ENCODE measurements at regions of chr19 and their contacts with region 1.

Region 1: DNA sequence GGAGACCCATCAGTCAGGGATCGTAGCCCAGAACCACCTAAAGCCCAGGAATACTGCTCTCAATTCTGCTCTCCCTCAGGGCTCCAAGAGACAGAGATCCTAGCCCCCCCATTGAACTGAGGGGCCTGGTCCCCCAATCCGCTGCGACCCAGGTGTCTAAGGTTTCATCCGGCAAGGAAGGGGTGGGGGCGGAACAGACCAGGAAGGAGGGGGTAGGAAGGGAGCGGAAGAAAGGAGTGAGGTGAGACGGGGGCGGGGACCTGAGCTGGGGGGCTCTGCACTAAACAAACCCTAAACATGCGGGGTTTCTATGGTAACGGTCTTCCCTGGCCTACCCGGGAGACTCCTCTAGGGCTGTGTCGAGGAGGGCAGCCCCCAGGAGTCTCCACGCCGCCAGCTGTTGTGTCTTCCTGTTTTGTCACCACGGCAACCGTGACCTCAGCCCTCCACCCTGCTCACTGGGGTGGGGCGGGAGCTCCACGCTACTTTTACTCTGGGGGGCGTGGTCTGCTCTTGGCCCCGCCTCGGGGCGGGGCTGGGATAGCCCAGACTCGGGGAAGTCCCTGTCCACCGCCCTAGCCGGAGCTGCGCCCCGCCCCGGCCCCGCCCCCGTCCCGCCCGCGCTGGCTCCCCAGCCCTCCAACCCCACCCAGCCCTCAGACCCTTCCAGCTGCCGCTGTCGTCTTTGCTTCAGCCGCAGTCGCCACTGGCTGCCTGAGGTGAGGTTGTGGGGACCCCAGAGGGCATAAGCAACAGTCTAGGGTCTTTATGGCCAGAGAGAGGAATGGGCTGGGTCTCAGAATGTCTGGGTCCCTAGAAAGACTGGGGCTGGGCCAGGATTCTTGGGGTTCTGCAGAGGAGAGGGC is at the start of gene MYADM:
- DNase-seq: peak; percentile 99 to 100 (median 100)
- ATAC-seq: peak; percentile 80
- H3K4me3 ChIP-seq: peak within 1 kb of the TSS; percentile 90
- H3K4me3 Mint-ChIP-seq: peak within 1 kb of the TSS; percentile 92 to 100 (median 97)
- H3K27ac ChIP-seq: peak within 1 kb of the TSS; percentile 99
- H3K27ac Mint-ChIP-seq: peak within 1 kb of the TSS; percentile 97 to 100 (median 99)
- H3K4me1 ChIP-seq: peaks cover 17 to 26% of the 10 kb centered on the region in 2 donors
- H3K4me1 Mint-ChIP-seq: peaks cover 15 to 45% (median 34%) of the 10 kb centered on the region in 7 donors
- H3K27me3 ChIP-seq: no peaks in the 10 kb centered on the region
- H3K27me3 Mint-ChIP-seq: peaks cover 0 to 5% (median 0%) of the 10 kb centered on the region in 5 donors
- total RNA-seq, gene MYADM: 51.5 to 524 (median 116) TPM

Region 2: GRCh38 chr19:53844849-53845246 is 22.6 kb before region 1 on chr19:
- CTCF ChIA-PET with region 1: no interaction called
- POLR2A ChIA-PET with region 1: interaction called, 3 read pairs
- intact Hi-C with region 1: loop called (anchors 1 kb)
- DNase-seq: no peak
- ATAC-seq: peak; percentile 63
- H3K4me3 ChIP-seq: no peak overlapping the region
- H3K4me3 Mint-ChIP-seq: no peak overlapping the region
- H3K27ac ChIP-seq: no peak overlapping the region
- H3K27ac Mint-ChIP-seq: no peak overlapping the region
- H3K4me1 ChIP-seq: peaks cover 0 to 3% of the 10 kb centered on the region in 2 donors
- H3K4me1 Mint-ChIP-seq: peaks cover 0 to 7% (median 5%) of the 10 kb centered on the region in 7 donors
- H3K27me3 ChIP-seq: peaks cover 0 to 4% of the 10 kb centered on the region in 2 donors
- H3K27me3 Mint-ChIP-seq: peaks cover 18 to 30% (median 23%) of the 10 kb centered on the region in 5 donors

Region 3: GRCh38 chr19:53906211-53907192 is 39.0 kb after region 1 on chr19:
- CTCF ChIA-PET with region 1: no interaction called
- POLR2A ChIA-PET with region 1: no interaction called
- intact Hi-C with region 1: loop called in 1 of 2 experiments (anchors 1 kb)
- DNase-seq: peak; percentile 33 to 78 (median 55)
- ATAC-seq: peak; percentile 80
- H3K4me3 ChIP-seq: no peak overlapping the region
- H3K4me3 Mint-ChIP-seq: peak overlapping the region in 6 of 10 donors; percentile 26 to 87 (median 63)
- H3K27ac ChIP-seq: no peak overlapping the region
- H3K27ac Mint-ChIP-seq: peak overlapping the region in 1 of 9 donors; percentile 10
- H3K4me1 ChIP-seq: peaks cover 5 to 13% of the 10 kb centered on the region in 2 donors
- H3K4me1 Mint-ChIP-seq: peaks cover 21 to 34% (median 28%) of the 10 kb centered on the region in 7 donors
- H3K27me3 ChIP-seq: peaks cover 3 to 34% of the 10 kb centered on the region in 2 donors
- H3K27me3 Mint-ChIP-seq: peaks cover 60 to 91% (median 78%) of the 10 kb centered on the region in 5 donors

Region 4: DNA sequence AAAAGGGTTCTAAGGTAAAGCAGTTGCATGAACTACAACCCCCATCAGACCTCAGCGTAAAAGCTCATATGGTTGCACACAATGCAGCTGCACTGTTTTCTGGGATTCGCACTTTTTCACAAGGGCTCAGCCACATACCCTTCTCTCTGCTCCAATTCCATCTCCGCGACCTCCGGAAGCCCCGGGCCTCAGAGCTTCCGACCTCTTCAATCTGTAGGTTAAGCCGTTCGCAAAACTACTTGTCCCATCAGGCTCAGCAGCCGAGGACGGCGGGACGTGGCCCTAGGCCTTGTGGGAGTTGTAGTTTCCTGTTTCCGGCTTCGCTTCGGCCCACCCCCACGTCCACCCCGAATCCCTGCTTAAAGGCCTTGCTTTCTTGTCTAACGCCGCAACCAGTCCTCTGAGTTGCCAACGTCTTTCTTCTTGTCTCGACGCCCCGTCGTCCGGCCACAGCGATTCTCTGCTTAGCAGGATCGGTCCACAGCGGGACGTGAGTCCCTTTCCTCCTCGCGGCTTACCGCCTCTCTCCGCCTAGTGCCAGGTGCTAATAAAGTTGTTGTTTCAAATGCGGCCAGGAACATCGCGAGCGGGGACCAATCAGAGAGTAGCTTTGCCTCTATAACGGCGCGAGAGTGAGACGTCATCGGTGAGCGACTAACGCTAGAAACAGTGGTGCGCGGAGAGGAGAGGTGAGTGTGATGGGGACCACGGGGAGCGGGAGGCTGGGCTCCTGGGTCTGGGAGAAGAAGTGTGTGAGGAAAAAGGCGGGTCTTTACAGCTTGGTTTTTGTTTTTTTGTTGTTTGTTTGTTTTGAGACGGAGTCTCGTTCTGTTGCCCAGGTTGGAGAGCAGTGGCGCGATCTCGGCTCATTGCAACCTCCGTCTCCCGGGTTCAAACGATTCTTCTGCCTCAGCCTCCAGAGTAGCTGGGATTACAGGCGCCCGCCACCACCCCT is 247.9 kb after region 1 on chr19 and contains the starts of genes PRPF31 and TFPT:
- CTCF ChIA-PET with region 1: no interaction called
- POLR2A ChIA-PET with region 1: interaction called, 3 read pairs
- intact Hi-C with region 1: loop called (anchors 1 to 5 kb)
- DNase-seq: peak; percentile 80 to 98 (median 97)
- ATAC-seq: peak; percentile 92
- H3K4me3 ChIP-seq: peak within 1 kb of the TSS; percentile 94
- H3K4me3 Mint-ChIP-seq: peak within 1 kb of the TSS; percentile 86 to 96 (median 94)
- H3K27ac ChIP-seq: peak within 1 kb of the TSS; percentile 88
- H3K27ac Mint-ChIP-seq: peak within 1 kb of the TSS; percentile 88 to 97 (median 94)
- H3K4me1 ChIP-seq: peaks cover 11 to 20% of the 10 kb centered on the region in 2 donors
- H3K4me1 Mint-ChIP-seq: peaks cover 23 to 48% (median 42%) of the 10 kb centered on the region in 7 donors
- H3K27me3 ChIP-seq: no peaks in the 10 kb centered on the region
- H3K27me3 Mint-ChIP-seq: peaks cover 0 to 2% (median 0%) of the 10 kb centered on the region in 5 donors
- total RNA-seq, gene PRPF31: 51.8 to 82.1 (median 71.0) TPM
- total RNA-seq, gene TFPT: 13.4 to 46.5 (median 14.6) TPM

Region 5: DNA sequence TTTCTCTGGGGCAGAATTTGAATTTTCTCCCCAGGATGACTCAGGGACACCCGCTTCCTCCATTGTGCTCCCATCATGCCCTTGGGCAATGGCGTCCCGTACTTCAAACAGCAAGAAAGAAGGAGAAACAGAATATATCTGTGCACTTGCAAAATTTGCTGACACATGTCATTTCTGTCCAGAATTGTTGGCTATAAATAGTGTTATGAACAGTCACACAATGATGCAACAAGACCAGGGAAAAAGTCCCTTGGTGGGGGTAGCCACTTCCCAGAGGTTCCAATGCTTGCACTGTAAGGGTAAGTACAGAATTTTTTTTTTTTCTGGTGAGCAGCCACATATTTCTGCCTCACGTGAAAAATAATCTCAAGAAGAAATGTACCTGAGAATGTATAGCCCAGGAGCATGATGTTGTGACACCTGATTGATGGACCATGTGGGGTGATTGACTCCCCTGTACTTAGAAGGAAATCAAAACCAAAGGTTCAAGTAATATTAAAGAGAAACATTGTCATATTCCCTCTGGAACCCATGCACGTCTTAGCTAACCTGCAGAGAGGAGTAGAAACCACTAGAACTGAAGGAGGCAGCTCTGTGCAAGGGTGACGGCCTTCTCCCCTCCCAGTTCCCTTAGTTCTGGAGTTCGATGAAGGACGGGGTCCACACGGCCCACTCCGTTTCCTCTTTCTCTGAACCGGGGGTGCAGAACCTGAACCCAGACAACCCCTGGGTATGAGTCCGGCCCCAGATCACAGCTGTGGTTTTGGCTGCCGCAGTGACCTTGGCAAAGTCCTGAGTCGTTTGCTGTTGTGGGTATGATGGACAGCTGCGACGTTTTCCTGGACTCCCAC is 506.5 kb after region 1 on chr19:
- CTCF ChIA-PET with region 1: no interaction called
- POLR2A ChIA-PET with region 1: no interaction called
- intact Hi-C with region 1: loop called in 1 of 2 experiments (anchors 10 kb)
- DNase-seq: no peak
- ATAC-seq: peak; percentile 56
- H3K4me3 ChIP-seq: no peak overlapping the region
- H3K4me3 Mint-ChIP-seq: peak overlapping the region; percentile 40 to 95 (median 88)
- H3K27ac ChIP-seq: no peak overlapping the region
- H3K27ac Mint-ChIP-seq: peak overlapping the region in 6 of 9 donors; percentile 14 to 79 (median 46)
- H3K4me1 ChIP-seq: peaks cover 50 to 67% of the 10 kb centered on the region in 2 donors
- H3K4me1 Mint-ChIP-seq: peaks cover 54 to 89% (median 79%) of the 10 kb centered on the region in 7 donors
- H3K27me3 ChIP-seq: no peaks in the 10 kb centered on the region
- H3K27me3 Mint-ChIP-seq: peaks cover 0 to 41% (median 0%) of the 10 kb centered on the region in 5 donors

Region 6: GRCh38 chr19:55653758-55654539 is 1786.5 kb after region 1 on chr19:
- CTCF ChIA-PET with region 1: no interaction called
- POLR2A ChIA-PET with region 1: no interaction called
- intact Hi-C with region 1: loop called in 1 of 2 experiments (anchors 5 kb)
- DNase-seq: peak; percentile 95 to 100 (median 100)
- ATAC-seq: peak; percentile 83
- H3K4me3 ChIP-seq: peak overlapping the region; percentile 98
- H3K4me3 Mint-ChIP-seq: peak overlapping the region; percentile 83 to 99 (median 96)
- H3K27ac ChIP-seq: peak overlapping the region; percentile 99
- H3K27ac Mint-ChIP-seq: peak overlapping the region; percentile 95 to 100 (median 99)
- H3K4me1 ChIP-seq: peaks cover 30 to 36% of the 10 kb centered on the region in 2 donors
- H3K4me1 Mint-ChIP-seq: peaks cover 29 to 55% (median 39%) of the 10 kb centered on the region in 7 donors
- H3K27me3 ChIP-seq: no peaks in the 10 kb centered on the region
- H3K27me3 Mint-ChIP-seq: peaks cover 0 to 2% (median 0%) of the 10 kb centered on the region in 5 donors

Measured in naive thymus-derived CD4-positive, alpha-beta T cell (primary cell).